ENCODE measurements at regions of chr12 and their contacts with region 1.

Region 1: GRCh38 chr12:131825146-131825892 is 2.9 kb upstream of the MMP17 start:
- DNase-seq: no peak
- ATAC-seq: no peak
- H3K4me3 ChIP-seq: no peak overlapping the region
- H3K27ac ChIP-seq: no peak overlapping the region
- H3K4me1 ChIP-seq: peaks cover 2% of the 10 kb centered on the region; the same call in 1 of the 2 replicates
- H3K27me3 ChIP-seq: no peaks in the 10 kb centered on the region
- CTCF ChIP-seq: no peak

Region 2: DNA sequence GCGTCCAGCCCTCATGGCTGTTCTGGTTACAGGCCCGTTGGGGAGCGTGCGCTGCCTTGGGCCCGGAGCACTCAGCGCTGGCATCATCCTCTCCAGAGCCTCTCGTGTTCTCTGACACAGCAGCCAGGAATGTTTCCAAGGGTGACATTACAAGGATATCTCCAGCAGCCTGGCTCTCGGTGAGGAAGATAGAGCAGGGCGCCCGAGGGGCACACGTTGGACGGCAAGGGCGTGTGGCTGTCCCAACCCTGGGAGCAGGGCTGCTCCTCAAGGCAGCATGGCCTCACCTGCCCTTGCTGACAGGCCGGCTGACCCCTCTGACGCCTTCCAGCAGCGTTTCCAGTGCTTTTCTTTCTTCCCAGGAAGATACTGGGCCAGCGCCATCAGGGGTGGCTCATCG is 770.7 kb after region 1 on chr12:
- CTCF ChIA-PET with region 1: no interaction called
- POLR2A ChIA-PET with region 1: interaction called, 17 read pairs
- in situ Hi-C with region 1: no loop called
- intact Hi-C with region 1: no loop called
- DNase-seq: no peak
- ATAC-seq: peak; percentile 17
- H3K4me3 ChIP-seq: no peak overlapping the region
- H3K27ac ChIP-seq: no peak overlapping the region
- H3K4me1 ChIP-seq: peaks cover 7% of the 10 kb centered on the region
- H3K27me3 ChIP-seq: no peaks in the 10 kb centered on the region
- CTCF ChIP-seq: no peak